Natural killer cell (primary cell): ENCODE measurements at regions of chr10 and their contacts with region 1.

Region 1: GRCh38 chr10:4656576-4657182 is 169.3 kb upstream of the AKR1E2 start:
- DNase-seq: peak; percentile 22 to 76
- ATAC-seq: peak in 2 of 3 donors; percentile 44 to 57
- H3K4me3 ChIP-seq: no peak overlapping the region
- H3K4me3 Mint-ChIP-seq: no peak overlapping the region
- H3K27ac ChIP-seq: no peak overlapping the region
- H3K27ac Mint-ChIP-seq: no peak overlapping the region
- H3K4me1 ChIP-seq: no peaks in the 10 kb centered on the region
- H3K4me1 Mint-ChIP-seq: no peaks in the 10 kb centered on the region
- H3K27me3 ChIP-seq: no peaks in the 10 kb centered on the region
- H3K27me3 Mint-ChIP-seq: peaks cover 11 to 24% of the 10 kb centered on the region in 2 donors
- CTCF ChIP-seq: peak; percentile 88

Region 2: GRCh38 chr10:3197348-3198003 is 1459.2 kb before region 1 on chr10:
- intact Hi-C with region 1: loop called (anchors 5 kb)
- DNase-seq: peak; percentile 74 to 77
- ATAC-seq: peak; percentile 76 to 89 (median 79)
- H3K4me3 ChIP-seq: peak overlapping the region; percentile 20
- H3K4me3 Mint-ChIP-seq: peak overlapping the region; percentile 67
- H3K27ac ChIP-seq: no peak overlapping the region
- H3K27ac Mint-ChIP-seq: peak overlapping the region in 1 of 2 donors; percentile 70
- H3K4me1 ChIP-seq: peaks cover 16% of the 10 kb centered on the region
- H3K4me1 Mint-ChIP-seq: peaks cover 22 to 33% of the 10 kb centered on the region in 2 donors
- H3K27me3 ChIP-seq: peaks cover 15% of the 10 kb centered on the region
- H3K27me3 Mint-ChIP-seq: peaks cover 61 to 78% of the 10 kb centered on the region in 2 donors
- CTCF ChIP-seq: peak; percentile 65

Region 3: DNA sequence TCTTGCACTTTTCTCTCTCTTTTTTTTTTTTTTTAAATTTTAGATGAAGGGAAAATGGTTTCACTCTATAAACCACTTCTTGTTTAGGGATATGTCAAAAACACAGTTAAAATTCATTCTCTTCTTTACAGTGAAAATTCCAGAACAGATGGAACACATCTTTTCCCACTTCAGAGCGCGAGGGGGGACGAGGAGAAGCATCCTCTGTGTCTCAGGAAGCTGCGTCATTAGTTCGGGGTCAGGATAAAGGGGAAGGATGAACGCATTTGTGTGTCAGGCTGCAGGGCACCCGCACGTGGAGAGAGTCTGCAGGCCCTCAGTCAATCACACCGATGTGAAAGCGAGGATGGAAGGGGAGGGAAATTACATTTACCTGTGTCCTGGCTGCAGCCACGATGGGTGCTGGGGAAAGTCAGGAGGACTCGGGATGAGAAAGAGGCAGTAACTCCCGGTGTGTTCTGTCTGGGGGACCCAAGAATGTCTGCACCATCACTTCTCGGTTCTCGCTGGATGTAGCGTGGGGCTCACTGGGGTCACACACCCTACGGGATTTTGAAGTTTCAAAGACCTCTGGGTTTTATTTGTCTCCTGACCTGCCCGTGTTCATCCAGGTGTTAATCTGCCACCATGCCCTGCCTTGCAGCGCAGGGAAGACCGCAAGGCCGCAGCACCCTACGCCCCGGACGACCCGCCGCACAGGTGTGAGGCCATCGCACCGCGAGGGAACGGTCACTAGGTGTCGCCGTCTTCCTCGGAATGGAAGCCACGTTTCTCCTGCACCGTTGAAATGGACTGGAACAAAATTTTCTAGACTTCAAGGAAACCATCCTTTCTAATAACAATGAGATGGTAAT is 1417.4 kb before region 1 on chr10:
- intact Hi-C with region 1: loop called (anchors 1 kb)
- DNase-seq: peak; percentile 55 to 83
- ATAC-seq: peak; percentile 70 to 90 (median 84)
- H3K4me3 ChIP-seq: no peak overlapping the region
- H3K4me3 Mint-ChIP-seq: no peak overlapping the region
- H3K27ac ChIP-seq: no peak overlapping the region
- H3K27ac Mint-ChIP-seq: no peak overlapping the region
- H3K4me1 ChIP-seq: peaks cover 9% of the 10 kb centered on the region
- H3K4me1 Mint-ChIP-seq: peaks cover 0 to 5% of the 10 kb centered on the region in 2 donors
- H3K27me3 ChIP-seq: peaks cover 5% of the 10 kb centered on the region
- H3K27me3 Mint-ChIP-seq: peaks cover 9 to 18% of the 10 kb centered on the region in 2 donors
- CTCF ChIP-seq: peak; percentile 78

Region 4: DNA sequence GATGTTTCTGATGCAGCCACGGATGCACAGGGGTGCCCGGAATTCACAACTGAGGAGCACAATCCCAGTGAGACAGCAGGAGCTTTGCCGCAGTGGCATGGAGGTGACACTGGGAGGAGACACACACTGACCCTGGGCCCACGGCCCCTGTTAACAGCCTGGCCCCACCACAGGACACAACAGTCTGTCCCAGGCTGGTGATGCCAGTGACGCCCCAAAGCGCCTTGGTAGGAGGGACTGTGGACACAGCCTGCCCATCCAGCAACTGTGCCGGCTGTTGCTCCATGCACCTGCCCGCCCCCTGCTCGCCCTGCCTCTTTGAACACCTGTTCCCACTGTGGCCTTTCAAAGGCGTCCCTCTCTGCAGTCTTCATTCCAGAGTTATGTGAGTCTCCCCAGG is 921.5 kb before region 1 on chr10:
- intact Hi-C with region 1: loop called (anchors 10 kb)
- DNase-seq: peak in 1 of 2 donors; percentile 41
- ATAC-seq: peak in 2 of 3 donors; percentile 57 to 58
- H3K4me3 ChIP-seq: no peak overlapping the region
- H3K4me3 Mint-ChIP-seq: no peak overlapping the region
- H3K27ac ChIP-seq: no peak overlapping the region
- H3K27ac Mint-ChIP-seq: no peak overlapping the region
- H3K4me1 ChIP-seq: no peaks in the 10 kb centered on the region
- H3K4me1 Mint-ChIP-seq: peaks cover 3 to 8% of the 10 kb centered on the region in 2 donors
- H3K27me3 ChIP-seq: no peaks in the 10 kb centered on the region
- H3K27me3 Mint-ChIP-seq: peaks cover 0 to 4% of the 10 kb centered on the region in 2 donors
- CTCF ChIP-seq: no peak

Region 5: DNA sequence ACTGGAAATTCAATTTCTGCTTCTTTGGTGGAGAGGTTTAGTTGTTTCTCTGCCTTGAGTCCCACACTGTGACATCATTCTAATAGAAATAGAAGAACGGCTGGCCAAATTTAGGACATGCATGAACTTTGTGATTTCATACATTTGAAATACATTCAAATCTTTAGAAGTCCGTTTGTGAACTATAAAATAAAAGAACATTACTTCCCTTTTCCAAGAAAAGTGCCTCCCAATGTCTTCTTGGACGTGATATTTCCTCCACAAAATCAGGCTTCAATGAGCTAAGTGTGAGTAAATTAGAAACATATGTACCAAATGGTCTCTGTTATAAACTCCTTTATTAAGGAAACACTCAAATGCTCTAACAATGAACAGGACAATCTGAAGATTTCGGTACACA is 145.2 kb before region 1 on chr10:
- intact Hi-C with region 1: no loop called
- DNase-seq: no peak
- ATAC-seq: no peak
- H3K4me3 ChIP-seq: no peak overlapping the region
- H3K4me3 Mint-ChIP-seq: no peak overlapping the region
- H3K27ac ChIP-seq: no peak overlapping the region
- H3K27ac Mint-ChIP-seq: no peak overlapping the region
- H3K4me1 ChIP-seq: peaks cover 6% of the 10 kb centered on the region
- H3K4me1 Mint-ChIP-seq: peaks cover 0 to 7% of the 10 kb centered on the region in 2 donors
- H3K27me3 ChIP-seq: no peaks in the 10 kb centered on the region
- H3K27me3 Mint-ChIP-seq: peaks cover 8 to 13% of the 10 kb centered on the region in 2 donors
- CTCF ChIP-seq: no peak